GM23248 (cell line): ENCODE measurements at regions of chr4 and their contacts with region 1.

Region 1: GRCh38 chr4:87465739-87466366 is 43.5 kb downstream of the NUDT9 start:
- DNase-seq: peak; percentile 70
- H3K4me3 ChIP-seq: no peak overlapping the region
- H3K27ac ChIP-seq: no peak overlapping the region
- H3K4me1 ChIP-seq: peaks cover 7% of the 10 kb centered on the region; the same call in 1 of the 2 replicates
- H3K27me3 ChIP-seq: no peaks in the 10 kb centered on the region

Region 2: DNA sequence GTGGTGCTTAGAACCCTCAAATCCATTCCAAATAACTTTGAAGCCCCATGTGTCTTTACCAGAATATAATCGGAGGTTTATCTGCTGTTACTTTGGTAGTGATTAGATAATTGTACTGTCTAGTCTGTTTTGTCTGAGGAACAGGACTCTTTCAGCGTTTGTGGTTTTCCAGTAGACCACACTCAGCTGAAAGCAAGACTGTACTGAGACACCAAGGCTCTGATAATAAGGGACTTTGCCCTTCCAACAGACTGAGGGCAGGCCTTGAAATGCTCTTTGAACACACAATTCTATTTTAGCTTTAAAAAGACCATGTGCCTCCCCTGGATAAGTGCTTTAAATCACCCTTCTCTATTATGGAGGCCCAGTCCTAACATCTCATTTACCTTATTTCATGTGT is 321.5 kb before region 1 on chr4:
- in situ Hi-C with region 1: loop called (anchors 25 kb)
- DNase-seq: no peak
- H3K4me3 ChIP-seq: no peak overlapping the region
- H3K27ac ChIP-seq: no peak overlapping the region
- H3K4me1 ChIP-seq: no peaks in the 10 kb centered on the region
- H3K27me3 ChIP-seq: no peaks in the 10 kb centered on the region

Region 3: GRCh38 chr4:87375719-87376291 is 90.0 kb before region 1 on chr4:
- in situ Hi-C with region 1: loop called (anchors 5 kb)
- DNase-seq: peak; percentile 92
- H3K4me3 ChIP-seq: no peak overlapping the region
- H3K27ac ChIP-seq: peak overlapping the region; percentile 62
- H3K4me1 ChIP-seq: peaks cover 14% of the 10 kb centered on the region
- H3K27me3 ChIP-seq: no peaks in the 10 kb centered on the region

Region 4: GRCh38 chr4:87758270-87758669 is 292.4 kb after region 1 on chr4:
- in situ Hi-C with region 1: no loop called
- DNase-seq: peak; percentile 13
- H3K4me3 ChIP-seq: no peak overlapping the region
- H3K27ac ChIP-seq: no peak overlapping the region
- H3K4me1 ChIP-seq: no peaks in the 10 kb centered on the region
- H3K27me3 ChIP-seq: peaks cover 13% of the 10 kb centered on the region

Region 5: DNA sequence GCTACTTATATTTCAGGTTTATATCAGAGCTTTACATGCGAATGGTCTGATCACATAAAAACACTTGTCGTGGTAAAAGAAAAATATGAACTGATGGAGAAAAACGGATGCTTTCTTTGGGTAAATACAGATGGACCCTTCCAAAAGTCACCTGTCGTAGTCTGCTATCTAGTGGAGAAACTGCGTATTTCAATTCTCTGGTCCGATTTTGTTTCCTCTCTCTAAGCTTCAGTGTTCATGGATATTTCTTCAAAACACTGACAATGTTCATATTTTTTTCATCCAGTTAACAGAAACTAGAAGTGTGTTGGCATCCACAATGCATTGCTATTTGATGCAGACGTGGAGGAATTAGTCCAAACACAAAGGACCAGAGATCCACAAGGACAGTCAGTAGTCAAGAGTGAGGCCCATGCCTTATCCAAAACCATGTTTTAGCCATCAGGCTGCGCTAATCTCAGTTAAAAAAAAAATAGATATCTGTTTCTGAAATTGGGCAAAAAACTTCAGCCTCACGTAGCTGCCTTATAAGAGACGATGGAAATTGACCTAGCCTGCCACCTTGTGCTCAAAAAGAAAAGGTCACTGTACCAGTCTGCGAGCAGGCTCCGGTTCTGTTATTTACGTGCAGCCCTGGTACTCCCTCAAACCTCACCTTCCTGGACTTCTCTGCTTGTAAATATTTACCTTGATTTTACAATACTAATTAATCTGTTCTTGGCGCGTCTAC is 382.9 kb after region 1 on chr4:
- in situ Hi-C with region 1: no loop called
- DNase-seq: peak; percentile 84
- H3K4me3 ChIP-seq: peak overlapping the region; percentile 56
- H3K27ac ChIP-seq: no peak overlapping the region
- H3K4me1 ChIP-seq: peaks cover 10% of the 10 kb centered on the region
- H3K27me3 ChIP-seq: no peaks in the 10 kb centered on the region

Region 6: DNA sequence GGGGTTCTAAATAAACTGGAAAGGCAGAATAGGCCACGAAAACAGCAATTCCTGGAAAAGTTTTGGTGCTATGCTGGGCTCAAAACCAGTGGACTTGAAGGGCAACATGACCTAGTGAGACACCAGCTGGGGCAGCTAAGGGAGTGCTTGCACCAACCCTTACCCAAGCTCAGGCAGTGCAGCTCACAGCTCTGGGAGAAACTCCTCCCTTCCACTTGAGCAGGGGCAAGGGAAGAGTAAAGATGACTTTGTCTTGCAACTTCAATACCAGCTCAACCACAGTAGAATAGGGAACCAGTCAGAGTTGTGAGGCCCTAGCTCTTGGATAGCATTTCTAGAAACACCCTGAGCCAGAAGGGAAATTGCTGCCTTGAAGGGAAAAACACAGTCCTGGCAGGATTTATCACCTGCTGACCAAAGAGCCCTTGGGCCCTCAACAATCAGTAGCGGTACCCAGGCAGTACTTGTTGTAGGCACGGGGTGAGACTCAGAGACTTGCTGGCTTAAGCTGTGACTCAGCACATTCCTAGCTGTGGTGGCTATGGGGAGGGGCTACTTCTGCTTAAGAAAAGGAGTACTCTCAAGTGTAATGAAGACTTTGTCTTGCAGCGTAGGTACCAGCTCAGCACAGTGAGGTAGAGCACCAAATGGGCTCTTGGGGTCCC is 712.2 kb after region 1 on chr4:
- in situ Hi-C with region 1: no loop called
- DNase-seq: peak; percentile 57
- H3K4me3 ChIP-seq: no peak overlapping the region
- H3K27ac ChIP-seq: no peak overlapping the region
- H3K4me1 ChIP-seq: no peaks in the 10 kb centered on the region
- H3K27me3 ChIP-seq: no peaks in the 10 kb centered on the region; the same call in 1 of the 2 replicates